Caco-2 (cell line): ENCODE measurements at regions of chr2 and their contacts with region 1.

Region 1: DNA sequence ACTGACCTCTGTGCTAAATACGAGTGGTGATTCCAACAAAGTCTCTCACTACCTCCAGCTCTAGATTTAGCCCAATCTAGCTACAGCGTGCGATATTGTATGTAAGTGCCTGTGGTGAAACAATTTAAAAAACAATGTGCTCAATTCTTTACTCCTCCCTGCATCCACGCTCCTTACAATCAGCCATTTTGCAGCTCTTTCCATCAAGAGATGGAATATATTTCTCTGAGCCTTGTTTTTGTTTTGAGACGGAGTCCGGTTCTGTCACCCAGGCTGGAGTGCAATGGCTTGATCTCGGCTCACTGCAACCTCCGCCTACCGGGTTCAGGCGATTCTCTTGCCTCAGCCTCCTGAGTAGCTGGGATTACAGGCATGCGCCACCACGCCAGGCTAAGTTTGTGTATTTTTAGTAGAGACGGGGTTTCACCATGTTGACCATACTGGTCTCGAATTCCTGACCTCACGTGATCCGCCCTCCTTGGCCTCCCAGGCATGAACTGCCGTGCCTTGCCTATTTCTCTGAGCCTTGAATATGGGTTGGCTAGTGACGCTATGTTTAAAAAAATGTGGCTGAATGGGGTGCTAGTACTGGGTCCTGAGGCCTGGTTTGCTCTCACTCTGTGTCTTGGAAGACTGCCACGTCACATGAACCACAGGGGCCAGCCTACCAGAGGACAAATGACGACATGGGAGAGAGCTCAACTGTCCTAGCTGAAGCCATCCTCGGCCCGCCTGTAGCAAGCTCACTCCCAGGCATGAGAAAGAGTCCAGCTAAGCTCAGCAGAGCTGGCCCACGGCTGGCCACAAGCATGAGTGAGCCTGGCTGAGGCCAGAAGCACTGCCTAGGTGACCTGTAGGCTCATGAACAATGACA is 14.8 kb downstream of the WDFY1 start:
- DNase-seq: peak; percentile 94 to 97
- H3K4me3 ChIP-seq: peak overlapping the region; percentile 24
- H3K4me3 Mint-ChIP-seq: peak overlapping the region; percentile 85
- H3K27ac Mint-ChIP-seq: peak overlapping the region; percentile 99
- H3K4me1 ChIP-seq: peaks cover 58% of the 10 kb centered on the region
- H3K4me1 Mint-ChIP-seq: peaks cover 39% of the 10 kb centered on the region
- H3K27me3 ChIP-seq: no peaks in the 10 kb centered on the region
- H3K27me3 Mint-ChIP-seq: no peaks in the 10 kb centered on the region
- CTCF ChIP-seq: no peak

Region 2: DNA sequence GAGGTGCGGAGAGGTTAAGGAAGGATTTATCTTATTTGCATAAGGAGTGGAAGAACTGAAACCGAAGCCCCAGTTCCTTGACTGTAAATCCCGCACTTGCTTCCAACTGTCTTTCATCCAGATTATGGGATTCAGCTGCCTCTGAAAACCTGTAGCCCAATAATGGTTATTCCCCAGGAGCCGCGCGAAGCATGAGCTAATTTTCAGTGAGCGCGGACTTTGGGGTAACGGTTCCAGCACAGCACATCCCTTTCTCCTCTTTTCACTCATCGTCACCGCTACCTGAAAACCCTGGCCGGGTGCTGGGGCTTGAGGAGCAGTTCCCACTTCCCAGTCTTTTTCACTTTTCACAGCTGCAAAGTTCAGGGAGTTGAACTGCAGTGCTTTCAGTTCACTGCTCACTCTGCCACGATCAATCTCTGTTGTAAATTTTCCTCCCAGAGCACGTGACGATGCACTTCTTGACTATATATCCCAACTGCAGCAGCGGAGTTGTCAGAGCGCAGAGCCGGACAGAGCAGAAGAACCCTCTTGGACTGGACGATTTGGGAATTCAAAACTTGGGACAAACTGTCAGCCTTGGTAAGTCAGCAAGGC is 878.5 kb before region 1 on chr2 and contains the start of gene KCNE4:
- CTCF ChIA-PET with region 1: no interaction called
- POLR2A ChIA-PET with region 1: interaction called, 16 read pairs
- intact Hi-C with region 1: no loop called
- DNase-seq: no peak
- H3K4me3 ChIP-seq: peak within 1 kb of the TSS; percentile 0; the same call in 1 of the 2 replicates
- H3K4me3 Mint-ChIP-seq: peak within 1 kb of the TSS; percentile 48
- H3K27ac Mint-ChIP-seq: no peak within 1 kb of the TSS
- H3K4me1 ChIP-seq: no peaks in the 10 kb centered on the region; the same call in 1 of the 2 replicates
- H3K4me1 Mint-ChIP-seq: peaks cover 6% of the 10 kb centered on the region
- H3K27me3 ChIP-seq: no peaks in the 10 kb centered on the region
- H3K27me3 Mint-ChIP-seq: no peaks in the 10 kb centered on the region
- CTCF ChIP-seq: no peak
- total RNA-seq, gene KCNE4: not detected in 2 replicates

Region 3: DNA sequence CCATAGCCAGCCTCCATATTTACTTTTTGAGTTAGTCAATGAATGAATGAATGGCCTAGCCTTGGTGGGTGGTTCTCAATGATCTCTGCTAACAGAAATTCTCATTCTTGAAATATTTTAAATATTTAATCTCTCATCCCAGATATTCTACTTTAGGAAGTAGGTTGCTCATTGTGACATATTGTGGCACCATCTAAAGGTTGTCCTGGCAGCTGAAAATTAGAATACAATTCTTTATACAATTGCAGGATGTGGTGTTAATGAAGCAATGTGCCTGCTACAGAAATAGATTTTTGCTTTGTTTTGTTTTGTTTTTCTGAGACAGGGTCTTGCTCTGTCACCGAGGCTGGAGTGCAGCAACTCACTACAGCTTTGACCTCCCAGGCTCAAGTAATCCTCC is 363.9 kb before region 1 on chr2:
- CTCF ChIA-PET with region 1: no interaction called
- POLR2A ChIA-PET with region 1: no interaction called
- intact Hi-C with region 1: no loop called
- DNase-seq: no peak
- H3K4me3 ChIP-seq: no peak overlapping the region
- H3K4me3 Mint-ChIP-seq: no peak overlapping the region
- H3K27ac Mint-ChIP-seq: no peak overlapping the region
- H3K4me1 ChIP-seq: no peaks in the 10 kb centered on the region
- H3K4me1 Mint-ChIP-seq: peaks cover 6% of the 10 kb centered on the region
- H3K27me3 ChIP-seq: no peaks in the 10 kb centered on the region
- H3K27me3 Mint-ChIP-seq: peaks cover 15% of the 10 kb centered on the region
- CTCF ChIP-seq: no peak

Region 4: DNA sequence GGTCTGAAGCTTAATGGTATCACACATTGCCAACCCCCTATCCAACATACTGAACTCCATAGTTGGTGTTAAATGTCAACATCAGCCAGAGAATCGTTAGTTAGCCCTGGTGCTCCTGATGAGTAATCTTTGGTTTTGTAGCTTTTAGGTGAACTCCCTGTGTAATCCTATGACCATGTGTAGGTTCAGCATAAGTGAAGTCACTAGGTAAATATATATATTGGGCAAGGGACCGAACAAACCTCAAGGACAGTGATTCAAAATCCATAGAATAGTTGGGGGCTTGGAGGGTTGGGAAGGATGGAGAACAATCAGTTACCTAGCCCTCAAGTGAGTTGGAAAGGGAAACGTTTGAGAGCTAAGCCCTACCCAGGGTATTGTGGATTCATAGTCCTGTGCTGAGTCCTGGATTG is 76.9 kb before region 1 on chr2:
- CTCF ChIA-PET with region 1: no interaction called
- POLR2A ChIA-PET with region 1: no interaction called
- intact Hi-C with region 1: loop called (anchors 1 kb)
- DNase-seq: no peak
- H3K4me3 ChIP-seq: no peak overlapping the region
- H3K4me3 Mint-ChIP-seq: peak overlapping the region; percentile 36
- H3K27ac Mint-ChIP-seq: peak overlapping the region; percentile 84
- H3K4me1 ChIP-seq: peaks cover 80% of the 10 kb centered on the region
- H3K4me1 Mint-ChIP-seq: peaks cover 70% of the 10 kb centered on the region
- H3K27me3 ChIP-seq: no peaks in the 10 kb centered on the region
- H3K27me3 Mint-ChIP-seq: no peaks in the 10 kb centered on the region
- CTCF ChIP-seq: no peak

Region 5: DNA sequence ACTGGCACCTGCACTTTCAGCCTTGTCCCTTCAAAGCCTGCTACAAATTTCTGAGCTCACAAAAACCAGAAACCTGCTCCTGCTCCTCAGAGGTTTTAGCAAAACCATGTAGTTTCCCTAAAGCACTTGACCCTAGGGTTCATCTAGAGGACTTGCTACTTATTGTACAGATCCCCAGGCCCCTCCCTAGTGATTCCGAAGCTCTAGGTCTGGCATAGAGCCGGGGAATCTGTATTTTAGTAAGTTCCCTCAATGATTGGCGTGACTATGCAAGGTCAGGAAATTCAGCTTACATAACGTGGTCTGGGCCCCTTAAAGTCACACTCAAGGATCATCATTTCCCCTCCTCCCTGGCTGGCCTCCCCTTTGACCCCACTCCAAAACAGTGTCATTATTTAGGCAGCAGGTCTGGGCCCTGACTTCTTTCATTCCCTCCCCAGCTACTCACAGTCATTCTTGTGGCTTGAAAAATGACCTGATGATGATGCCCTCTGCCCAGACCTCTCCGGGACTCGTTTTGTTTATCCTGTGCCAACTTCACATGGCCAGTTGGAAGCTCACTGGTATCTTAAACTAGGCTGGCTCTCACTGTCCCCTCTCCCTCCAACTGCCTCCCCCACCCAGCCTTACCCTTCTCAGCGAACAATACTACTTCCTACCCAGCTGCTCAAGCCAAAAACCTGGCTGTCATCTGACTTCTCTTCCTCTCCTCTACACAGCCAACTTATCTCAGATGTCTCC is 21.2 kb before region 1 on chr2:
- CTCF ChIA-PET with region 1: interaction called, 8 read pairs
- POLR2A ChIA-PET with region 1: interaction called, 19 read pairs
- intact Hi-C with region 1: loop called (anchors 1 kb)
- DNase-seq: peak in 1 of 2 experiments; percentile 48
- H3K4me3 ChIP-seq: no peak overlapping the region
- H3K4me3 Mint-ChIP-seq: peak overlapping the region; percentile 57
- H3K27ac Mint-ChIP-seq: peak overlapping the region; percentile 80
- H3K4me1 ChIP-seq: peaks cover 41% of the 10 kb centered on the region
- H3K4me1 Mint-ChIP-seq: peaks cover 37% of the 10 kb centered on the region
- H3K27me3 ChIP-seq: no peaks in the 10 kb centered on the region
- H3K27me3 Mint-ChIP-seq: no peaks in the 10 kb centered on the region
- CTCF ChIP-seq: no peak

Region 6: DNA sequence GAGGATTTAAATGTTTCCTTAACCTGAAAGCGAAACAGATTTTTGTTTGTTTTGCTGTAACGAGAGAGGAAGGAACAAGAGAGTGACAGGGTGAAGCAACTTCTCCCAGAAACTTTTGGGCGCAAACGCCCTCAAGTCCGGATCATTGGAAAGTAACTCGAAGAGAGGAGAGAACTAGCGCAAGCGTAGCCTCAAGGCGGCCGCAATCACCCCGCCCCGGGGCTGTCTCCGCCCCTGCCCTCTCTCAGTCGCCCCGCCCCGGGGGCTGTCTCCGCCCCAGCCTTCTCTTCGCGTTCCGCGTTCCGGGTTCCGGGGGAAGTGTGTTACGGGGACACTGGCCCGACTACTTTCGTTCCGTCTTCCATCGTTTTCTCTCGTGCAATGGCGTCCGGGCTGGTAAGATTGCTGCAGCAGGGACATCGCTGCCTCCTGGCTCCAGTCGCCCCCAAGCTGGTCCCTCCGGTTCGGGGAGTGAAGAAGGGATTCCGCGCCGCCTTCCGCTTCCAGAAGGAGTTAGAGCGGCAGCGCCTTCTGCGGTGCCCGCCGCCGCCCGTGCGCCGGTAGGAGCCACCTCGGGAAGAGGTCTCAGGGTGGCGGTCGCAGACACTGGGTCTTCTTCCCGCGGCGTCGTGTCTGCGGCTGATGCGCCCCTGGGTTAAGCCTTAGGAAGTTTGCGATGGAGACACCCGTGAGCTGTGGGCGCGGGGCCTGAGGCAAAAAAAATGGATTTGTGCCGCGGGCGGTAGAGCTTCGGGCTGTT is 26.9 kb after region 1 on chr2 and contains the start of gene MRPL44:
- CTCF ChIA-PET with region 1: no interaction called
- POLR2A ChIA-PET with region 1: interaction called, 8 read pairs
- intact Hi-C with region 1: loop called (anchors 1 kb)
- DNase-seq: peak; percentile 97 to 100
- H3K4me3 ChIP-seq: peak within 1 kb of the TSS; percentile 93
- H3K4me3 Mint-ChIP-seq: peak within 1 kb of the TSS; percentile 92
- H3K27ac Mint-ChIP-seq: peak within 1 kb of the TSS; percentile 98
- H3K4me1 ChIP-seq: peaks cover 12% of the 10 kb centered on the region
- H3K4me1 Mint-ChIP-seq: peaks cover 35% of the 10 kb centered on the region
- H3K27me3 ChIP-seq: no peaks in the 10 kb centered on the region
- H3K27me3 Mint-ChIP-seq: no peaks in the 10 kb centered on the region
- CTCF ChIP-seq: no peak
- total RNA-seq, gene MRPL44: 64.9 and 66.6 TPM in 2 replicates